Panc1 (cell line): ENCODE measurements at regions of chr3 and their contacts with region 1.

Region 1: DNA sequence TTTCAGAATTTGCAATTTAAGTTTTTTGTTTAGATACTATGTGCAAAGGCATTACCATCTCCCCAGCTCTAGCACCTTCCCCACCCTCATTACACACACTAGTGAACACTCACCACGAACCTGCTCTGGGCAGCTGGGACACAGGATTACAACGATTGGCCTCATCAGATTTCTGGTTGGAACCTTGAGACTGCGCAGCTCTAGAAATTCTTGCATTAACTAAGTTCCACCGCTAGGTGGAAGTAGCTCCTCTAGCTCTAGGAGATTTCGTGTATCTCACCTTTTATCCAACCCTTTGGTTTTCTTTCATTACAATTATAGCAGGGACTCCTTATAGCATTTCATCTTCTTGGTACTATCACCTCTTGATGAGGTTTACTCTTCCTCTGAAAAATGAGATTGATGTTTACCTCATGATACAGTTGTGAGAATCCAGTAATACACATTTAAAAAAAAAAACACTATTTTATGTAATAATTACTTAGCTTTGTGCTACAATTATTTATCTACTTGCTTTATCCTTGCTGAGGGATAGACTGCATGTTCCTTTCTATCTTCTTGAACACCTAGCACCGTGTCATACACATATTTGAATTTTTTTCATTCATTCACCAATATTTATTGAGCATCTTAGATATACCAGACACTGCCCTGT is 28.7 kb upstream of the PLOD2 start:
- DNase-seq: peak; percentile 55
- ATAC-seq: peak; percentile 95
- H3K4me3 ChIP-seq: peak overlapping the region; percentile 21 to 32
- H3K27ac ChIP-seq: peak overlapping the region; percentile 71; the same call in 1 of the 2 replicates
- H3K4me1 ChIP-seq: peaks cover 10% of the 10 kb centered on the region
- H3K27me3 ChIP-seq: no peaks in the 10 kb centered on the region
- CTCF ChIP-seq: peak; percentile 91

Region 2: GRCh38 chr3:145760036-145760435 is 429.6 kb before region 1 on chr3:
- CTCF ChIA-PET with region 1: no interaction called
- POLR2A ChIA-PET with region 1: no interaction called
- in situ Hi-C with region 1: no loop called
- intact Hi-C with region 1: no loop called
- DNase-seq: no peak
- ATAC-seq: no peak
- H3K4me3 ChIP-seq: no peak overlapping the region
- H3K27ac ChIP-seq: no peak overlapping the region
- H3K4me1 ChIP-seq: no peaks in the 10 kb centered on the region
- H3K27me3 ChIP-seq: no peaks in the 10 kb centered on the region
- CTCF ChIP-seq: no peak

Region 3: GRCh38 chr3:145776782-145777408 is 412.8 kb before region 1 on chr3:
- CTCF ChIA-PET with region 1: interaction called, 4 read pairs
- POLR2A ChIA-PET with region 1: no interaction called
- in situ Hi-C with region 1: no loop called
- intact Hi-C with region 1: loop called (anchors 10 kb)
- DNase-seq: peak; percentile 28
- ATAC-seq: no peak
- H3K4me3 ChIP-seq: no peak overlapping the region
- H3K27ac ChIP-seq: no peak overlapping the region
- H3K4me1 ChIP-seq: no peaks in the 10 kb centered on the region
- H3K27me3 ChIP-seq: no peaks in the 10 kb centered on the region
- CTCF ChIP-seq: peak; percentile 73; the same call in 1 of the 2 replicates

Region 4: GRCh38 chr3:146065573-146066006 is 124.1 kb before region 1 on chr3:
- CTCF ChIA-PET with region 1: interaction called, 20 read pairs
- POLR2A ChIA-PET with region 1: interaction called, 3 read pairs
- in situ Hi-C with region 1: no loop called
- intact Hi-C with region 1: loop called (anchors 1 kb)
- DNase-seq: peak; percentile 43
- ATAC-seq: no peak
- H3K4me3 ChIP-seq: no peak overlapping the region
- H3K27ac ChIP-seq: no peak overlapping the region
- H3K4me1 ChIP-seq: no peaks in the 10 kb centered on the region
- H3K27me3 ChIP-seq: no peaks in the 10 kb centered on the region
- CTCF ChIP-seq: peak; percentile 37; the same call in 1 of the 2 replicates

Region 5: DNA sequence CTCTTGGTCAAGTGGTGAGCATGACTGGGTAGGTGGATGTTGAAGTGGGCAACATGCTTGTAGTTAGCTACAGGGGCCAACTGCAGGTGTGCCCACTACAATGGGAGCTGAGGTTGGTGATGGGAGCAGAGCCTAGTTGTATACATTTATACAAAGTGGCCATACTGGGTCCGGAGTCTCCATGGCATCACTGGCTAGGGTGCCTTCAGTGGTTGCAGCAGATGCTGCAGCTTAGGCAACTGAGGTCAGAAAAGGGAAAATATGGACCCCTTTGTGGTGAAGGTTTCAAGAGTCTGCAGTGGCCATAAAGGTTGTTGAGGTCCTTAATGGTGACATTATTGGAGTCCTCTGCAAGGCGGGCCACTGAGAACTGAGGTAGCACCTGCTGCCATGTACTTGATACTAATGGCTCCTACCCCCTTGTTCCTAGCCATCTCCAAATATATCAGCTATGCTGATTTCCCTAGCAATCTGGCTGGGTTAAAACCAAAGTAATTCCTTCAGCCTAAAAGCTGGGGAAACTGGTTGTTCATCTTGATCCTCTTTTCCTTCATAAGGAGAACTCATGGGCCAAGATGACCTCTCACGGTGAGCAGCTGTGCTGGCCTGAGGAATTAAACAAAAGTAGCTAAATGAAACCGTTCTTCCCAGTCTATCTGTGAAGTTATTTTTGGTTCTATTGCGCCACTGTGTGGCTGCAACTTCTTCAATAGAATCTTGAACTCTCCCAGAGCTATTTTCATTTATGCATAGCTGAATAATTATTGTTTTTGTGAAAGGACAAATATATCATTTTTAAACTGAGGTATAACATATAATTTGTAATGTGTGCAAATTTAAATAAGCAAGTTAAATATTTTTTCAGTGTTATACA is 137.3 kb after region 1 on chr3:
- CTCF ChIA-PET with region 1: interaction called, 22 read pairs
- POLR2A ChIA-PET with region 1: no interaction called
- in situ Hi-C with region 1: no loop called
- intact Hi-C with region 1: loop called (anchors 1 kb)
- DNase-seq: peak; percentile 25
- ATAC-seq: peak; percentile 91
- H3K4me3 ChIP-seq: no peak overlapping the region
- H3K27ac ChIP-seq: no peak overlapping the region
- H3K4me1 ChIP-seq: no peaks in the 10 kb centered on the region
- H3K27me3 ChIP-seq: no peaks in the 10 kb centered on the region
- CTCF ChIP-seq: peak; percentile 71

Region 6: DNA sequence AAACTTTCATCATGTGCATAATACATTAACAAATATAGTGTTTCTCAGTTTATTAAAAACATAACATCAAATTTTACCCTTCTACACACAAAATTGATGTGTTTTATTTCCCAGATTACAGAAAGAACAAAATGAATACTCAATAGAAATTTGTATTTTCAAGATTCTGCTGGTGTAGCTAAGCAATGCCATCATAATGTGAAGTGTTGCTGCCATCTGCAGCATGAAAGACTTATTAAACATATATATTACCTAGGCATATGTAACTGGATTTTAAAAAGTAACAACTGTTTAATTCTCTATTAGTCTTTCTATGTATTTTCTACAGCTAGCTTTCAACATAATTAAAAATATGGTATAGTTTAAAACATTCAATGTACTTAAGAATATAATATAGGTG is 388.0 kb after region 1 on chr3:
- CTCF ChIA-PET with region 1: interaction called, 14 read pairs
- POLR2A ChIA-PET with region 1: no interaction called
- in situ Hi-C with region 1: no loop called
- intact Hi-C with region 1: loop called (anchors 1 kb)
- DNase-seq: no peak
- ATAC-seq: peak; percentile 85
- H3K4me3 ChIP-seq: no peak overlapping the region
- H3K27ac ChIP-seq: peak overlapping the region; percentile 69; the same call in 1 of the 2 replicates
- H3K4me1 ChIP-seq: no peaks in the 10 kb centered on the region
- H3K27me3 ChIP-seq: no peaks in the 10 kb centered on the region
- CTCF ChIP-seq: peak; percentile 31; the same call in 1 of the 2 replicates